ENCODE measurements at regions of chr11 and their contacts with region 1.

Region 1: DNA sequence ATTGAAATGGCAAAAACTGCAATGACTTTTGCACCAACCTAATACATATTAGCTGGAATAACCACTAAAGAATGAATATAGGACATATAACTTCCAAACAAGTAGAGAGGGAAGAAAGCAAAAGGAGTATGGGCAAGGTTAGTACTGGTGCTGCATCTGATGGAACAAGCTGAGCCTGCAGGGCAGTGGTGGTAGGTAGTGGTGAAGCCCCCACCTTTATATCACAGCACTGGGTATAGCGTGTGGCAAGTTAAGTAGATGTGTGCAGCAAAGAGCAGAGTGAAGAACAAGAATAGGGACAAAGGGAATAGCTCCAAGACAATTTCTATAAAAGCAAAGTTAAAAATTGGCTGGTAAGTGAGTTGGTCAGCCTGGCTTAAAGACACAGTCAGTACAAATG is 62.3 kb downstream of the CTNND1 start:
- DNase-seq: no peak
- ATAC-seq: no peak
- H3K4me3 ChIP-seq: no peak overlapping the region
- H3K27ac ChIP-seq: no peak overlapping the region
- H3K4me1 ChIP-seq: no peaks in the 10 kb centered on the region
- H3K27me3 ChIP-seq: no peaks in the 10 kb centered on the region
- CTCF ChIP-seq: no peak

Region 2: DNA sequence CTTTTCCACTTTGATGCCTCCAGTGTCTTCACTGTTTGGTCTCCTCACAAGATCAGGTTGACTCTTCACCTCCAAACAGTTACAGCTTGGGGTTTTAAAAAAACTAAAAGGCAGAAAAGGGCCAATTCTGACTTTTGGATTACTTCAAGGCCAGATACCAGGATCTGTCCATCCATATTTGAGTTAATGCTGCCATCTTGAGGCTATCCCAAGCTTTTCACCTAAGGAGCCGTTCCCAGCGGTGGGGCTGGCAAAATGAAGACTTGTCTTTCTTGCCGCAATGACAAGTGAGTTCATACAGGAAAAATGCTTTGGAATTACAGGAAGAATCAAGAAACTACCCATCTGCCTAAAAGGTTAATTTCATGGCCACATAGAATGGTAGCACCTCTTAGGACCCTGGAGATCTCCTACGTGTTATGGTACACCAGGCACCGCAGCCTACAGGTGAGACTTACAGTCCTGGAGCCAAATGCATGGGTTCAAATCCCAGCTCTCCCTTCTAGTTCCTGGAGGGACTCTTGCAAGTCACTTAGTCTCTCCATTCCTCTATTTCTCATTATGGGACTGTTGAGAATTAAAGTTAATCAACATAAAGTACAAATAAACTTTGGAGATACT is 690.0 kb after region 1 on chr11:
- intact Hi-C with region 1: loop called in 1 of 2 experiments (anchors 10 kb)
- DNase-seq: peak in 1 of 2 donors; percentile 46
- ATAC-seq: peak in 3 of 4 donors; percentile 46 to 82 (median 55)
- H3K4me3 ChIP-seq: no peak overlapping the region
- H3K27ac ChIP-seq: no peak overlapping the region
- H3K4me1 ChIP-seq: no peaks in the 10 kb centered on the region
- H3K27me3 ChIP-seq: no peaks in the 10 kb centered on the region
- CTCF ChIP-seq: peak; percentile 69